ENCODE measurements at regions of chr15 and their contacts with region 1.

Region 1: DNA sequence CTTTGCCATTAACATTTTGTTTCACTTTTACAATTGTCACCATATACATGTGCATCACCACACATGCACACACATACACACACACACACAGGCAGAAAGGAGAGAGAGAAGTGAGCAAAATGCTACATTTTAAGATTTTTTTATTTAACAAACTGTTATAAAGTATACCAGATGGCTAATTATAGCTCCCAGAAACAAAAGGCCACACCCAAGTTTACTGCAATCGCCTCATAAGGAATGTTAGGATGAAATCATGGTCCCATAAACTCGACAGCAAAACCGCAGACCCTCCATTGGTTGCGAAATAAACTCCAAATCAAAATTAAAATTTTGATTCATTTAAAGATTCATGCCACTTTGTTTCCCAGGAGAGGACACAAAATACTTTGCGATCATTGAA is 16.1 kb upstream of the C15orf61 start:
- DNase-seq: no peak
- H3K4me3 ChIP-seq: no peak overlapping the region
- H3K27ac ChIP-seq: no peak overlapping the region
- H3K4me1 ChIP-seq: no peaks in the 10 kb centered on the region
- H3K27me3 ChIP-seq: no peaks in the 10 kb centered on the region
- CTCF ChIP-seq: no peak

Region 2: GRCh38 chr15:67542420-67543347 is 37.9 kb after region 1 on chr15 and contains the start of gene MAP2K5:
- CTCF ChIA-PET with region 1: no interaction called
- POLR2A ChIA-PET with region 1: interaction called, 12 read pairs
- intact Hi-C with region 1: no loop called
- DNase-seq: peak; percentile 48 to 80
- H3K4me3 ChIP-seq: peak within 1 kb of the TSS; percentile 82
- H3K27ac ChIP-seq: peak within 1 kb of the TSS; percentile 54
- H3K4me1 ChIP-seq: peaks cover 7% of the 10 kb centered on the region
- H3K27me3 ChIP-seq: no peaks in the 10 kb centered on the region
- CTCF ChIP-seq: no peak
- total RNA-seq, gene MAP2K5: 25.6 and 26.9 TPM in 2 replicates

Region 3: DNA sequence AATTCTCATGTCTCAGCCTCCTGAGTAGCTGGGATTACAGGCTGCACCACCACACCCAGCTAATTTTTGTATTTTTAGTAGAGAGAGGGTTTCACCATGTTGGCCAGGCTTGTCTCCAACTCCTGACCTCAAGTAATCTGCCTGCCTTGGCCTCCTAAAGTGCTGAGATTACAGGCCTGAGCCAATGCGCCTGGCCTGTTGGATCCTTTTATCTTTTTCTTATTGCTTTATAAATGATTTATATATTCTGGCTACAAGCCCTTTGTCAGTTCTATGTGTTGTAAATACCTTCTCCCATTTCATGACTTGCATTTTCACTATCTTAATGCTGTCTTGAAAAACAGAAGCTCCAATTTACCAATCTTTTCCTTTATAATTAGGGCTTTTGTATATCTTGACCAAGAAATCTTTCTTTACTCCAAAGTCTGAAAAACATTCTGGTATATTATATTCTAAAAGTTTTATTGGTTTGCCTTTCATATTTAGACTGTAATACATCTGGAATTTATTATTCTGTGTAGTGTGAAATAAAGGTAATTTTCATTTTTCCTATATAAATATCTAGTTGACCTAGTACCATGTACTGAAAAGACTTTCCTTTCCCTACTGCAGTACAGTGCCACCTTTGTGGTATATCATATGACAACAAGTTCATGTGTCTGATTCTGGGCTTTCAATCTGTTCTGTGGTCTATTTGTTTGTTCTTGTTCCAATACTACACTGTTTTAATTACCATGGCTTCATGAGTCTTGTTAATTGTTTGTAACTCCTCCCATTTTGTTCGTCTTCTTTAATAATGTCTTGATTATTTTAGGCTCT is 388.0 kb after region 1 on chr15:
- CTCF ChIA-PET with region 1: no interaction called
- POLR2A ChIA-PET with region 1: no interaction called
- intact Hi-C with region 1: no loop called
- DNase-seq: no peak
- H3K4me3 ChIP-seq: no peak overlapping the region
- H3K27ac ChIP-seq: no peak overlapping the region
- H3K4me1 ChIP-seq: no peaks in the 10 kb centered on the region
- H3K27me3 ChIP-seq: no peaks in the 10 kb centered on the region
- CTCF ChIP-seq: no peak

Measured in PC-9 (cell line).